Heart right ventricle (tissue), 16 donors: ENCODE measurements at regions of chr14 and their contacts with region 1.

Region 1: DNA sequence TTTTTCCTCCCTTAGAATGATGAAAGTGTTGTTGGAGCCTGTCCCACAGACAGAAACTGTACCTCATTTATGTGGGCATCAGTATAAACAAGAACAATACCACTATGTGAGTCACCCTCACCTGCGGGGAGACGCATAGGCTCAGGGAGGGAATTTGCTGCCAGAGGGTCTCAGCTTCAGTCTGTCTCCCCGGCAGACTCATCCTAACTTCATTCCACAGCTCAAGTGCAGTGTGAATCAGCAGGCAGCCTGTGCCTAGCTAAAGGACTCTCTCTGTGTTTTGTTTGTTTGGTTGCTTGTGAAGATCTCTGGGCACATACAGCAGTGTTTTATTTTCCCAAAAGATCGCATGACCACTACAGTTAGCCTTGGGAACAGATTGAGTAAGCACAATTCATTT is 98.9 kb downstream of the PRKCH start:
- DNase-seq: no peak
- ATAC-seq: no peak
- H3K4me3 ChIP-seq: no peak overlapping the region
- H3K27ac ChIP-seq: peak overlapping the region in 4 of 10 donors; percentile 6 to 83 (median 32)
- H3K4me1 ChIP-seq: peaks cover 0 to 76% (median 55%) of the 10 kb centered on the region in 9 donors
- H3K27me3 ChIP-seq: no peaks in the 10 kb centered on the region
- CTCF ChIP-seq: no peak

Region 2: DNA sequence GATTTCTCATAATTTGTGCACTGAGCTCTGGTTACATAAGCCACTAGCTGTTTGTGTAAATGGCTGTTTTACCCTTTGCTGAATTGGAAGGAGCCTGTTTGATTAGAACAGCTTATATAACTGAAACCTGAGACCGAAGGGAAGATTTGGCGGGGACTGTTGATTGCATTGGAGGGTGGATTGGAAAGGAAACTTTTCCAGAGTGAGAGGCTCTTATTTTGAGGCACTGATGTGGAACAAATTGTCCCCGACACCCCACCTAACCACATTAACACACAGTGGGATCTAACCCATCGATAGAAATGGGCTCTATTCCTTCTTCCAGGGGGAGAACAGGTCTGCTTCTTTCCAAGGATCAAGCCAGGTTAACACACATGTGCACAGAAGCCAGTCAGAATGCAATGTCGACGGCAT is 190.8 kb before region 1 on chr14:
- intact Hi-C with region 1: no loop called
- DNase-seq: no peak
- ATAC-seq: peak in 1 of 8 donors; percentile 28
- H3K4me3 ChIP-seq: no peak overlapping the region
- H3K27ac ChIP-seq: no peak overlapping the region
- H3K4me1 ChIP-seq: no peaks in the 10 kb centered on the region
- H3K27me3 ChIP-seq: peaks cover 0 to 30% (median 5%) of the 10 kb centered on the region in 7 donors
- CTCF ChIP-seq: no peak

Region 3: DNA sequence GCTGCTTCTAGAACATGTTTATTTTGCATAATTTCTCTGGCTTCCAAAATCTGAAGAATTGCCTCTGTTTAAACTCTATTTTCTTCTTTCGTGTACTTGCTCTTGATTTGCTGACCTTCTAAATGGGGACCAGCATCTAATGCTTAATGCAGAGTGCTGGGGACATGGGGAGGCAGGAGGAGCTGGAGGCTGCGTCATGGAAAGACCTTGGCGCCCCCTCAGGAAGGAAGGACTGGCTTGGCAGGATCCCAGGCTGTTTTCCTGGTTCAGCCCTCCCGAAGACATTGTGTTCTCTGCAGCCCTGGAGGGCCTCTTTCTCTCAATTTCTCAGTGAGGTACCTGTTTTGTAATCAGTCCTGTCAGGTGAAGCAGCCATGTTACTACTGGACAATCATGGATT is 93.5 kb before region 1 on chr14:
- intact Hi-C with region 1: loop called in 2 of 10 experiments (anchors 2 to 5 kb)
- DNase-seq: peak; percentile 76 to 90
- ATAC-seq: peak; percentile 71 to 91 (median 84)
- H3K4me3 ChIP-seq: peak overlapping the region in 6 of 10 donors; percentile 6 to 30 (median 14)
- H3K27ac ChIP-seq: peak overlapping the region; percentile 62 to 94 (median 87)
- H3K4me1 ChIP-seq: peaks cover 0 to 64% (median 34%) of the 10 kb centered on the region in 9 donors
- H3K27me3 ChIP-seq: peaks cover 0 to 15% (median 7%) of the 10 kb centered on the region in 7 donors
- CTCF ChIP-seq: peak in 1 of 9 donors; percentile 16

Region 4: GRCh38 chr14:61355892-61356325 is 64.4 kb before region 1 on chr14:
- intact Hi-C with region 1: loop called in 2 of 10 experiments (anchors 5 to 10 kb)
- DNase-seq: peak; percentile 23 to 80
- ATAC-seq: peak; percentile 74 to 96 (median 93)
- H3K4me3 ChIP-seq: no peak overlapping the region
- H3K27ac ChIP-seq: peak overlapping the region in 9 of 10 donors; percentile 14 to 75 (median 48)
- H3K4me1 ChIP-seq: peaks cover 0 to 57% (median 30%) of the 10 kb centered on the region in 9 donors
- H3K27me3 ChIP-seq: no peaks in the 10 kb centered on the region
- CTCF ChIP-seq: no peak

Region 5: GRCh38 chr14:61368114-61368726 is 52.1 kb before region 1 on chr14:
- intact Hi-C with region 1: loop called in 1 of 10 experiments (anchors 10 kb)
- DNase-seq: no peak
- ATAC-seq: peak in 4 of 8 donors; percentile 20 to 29 (median 25)
- H3K4me3 ChIP-seq: no peak overlapping the region
- H3K27ac ChIP-seq: peak overlapping the region in 4 of 10 donors; percentile 16 to 49 (median 30)
- H3K4me1 ChIP-seq: peaks cover 0 to 59% (median 23%) of the 10 kb centered on the region in 9 donors
- H3K27me3 ChIP-seq: no peaks in the 10 kb centered on the region
- CTCF ChIP-seq: no peak

Region 6: GRCh38 chr14:61561657-61562276 is 141.4 kb after region 1 on chr14:
- intact Hi-C with region 1: no loop called
- DNase-seq: peak; percentile 41 to 82
- ATAC-seq: peak; percentile 68 to 92 (median 85)
- H3K4me3 ChIP-seq: no peak overlapping the region
- H3K27ac ChIP-seq: peak overlapping the region; percentile 55 to 93 (median 80)
- H3K4me1 ChIP-seq: peaks cover 9 to 72% (median 37%) of the 10 kb centered on the region in 9 donors
- H3K27me3 ChIP-seq: no peaks in the 10 kb centered on the region
- CTCF ChIP-seq: peak in 1 of 9 donors; percentile 11